ENCODE measurements at regions of chr9 and their contacts with region 1.

Region 1: DNA sequence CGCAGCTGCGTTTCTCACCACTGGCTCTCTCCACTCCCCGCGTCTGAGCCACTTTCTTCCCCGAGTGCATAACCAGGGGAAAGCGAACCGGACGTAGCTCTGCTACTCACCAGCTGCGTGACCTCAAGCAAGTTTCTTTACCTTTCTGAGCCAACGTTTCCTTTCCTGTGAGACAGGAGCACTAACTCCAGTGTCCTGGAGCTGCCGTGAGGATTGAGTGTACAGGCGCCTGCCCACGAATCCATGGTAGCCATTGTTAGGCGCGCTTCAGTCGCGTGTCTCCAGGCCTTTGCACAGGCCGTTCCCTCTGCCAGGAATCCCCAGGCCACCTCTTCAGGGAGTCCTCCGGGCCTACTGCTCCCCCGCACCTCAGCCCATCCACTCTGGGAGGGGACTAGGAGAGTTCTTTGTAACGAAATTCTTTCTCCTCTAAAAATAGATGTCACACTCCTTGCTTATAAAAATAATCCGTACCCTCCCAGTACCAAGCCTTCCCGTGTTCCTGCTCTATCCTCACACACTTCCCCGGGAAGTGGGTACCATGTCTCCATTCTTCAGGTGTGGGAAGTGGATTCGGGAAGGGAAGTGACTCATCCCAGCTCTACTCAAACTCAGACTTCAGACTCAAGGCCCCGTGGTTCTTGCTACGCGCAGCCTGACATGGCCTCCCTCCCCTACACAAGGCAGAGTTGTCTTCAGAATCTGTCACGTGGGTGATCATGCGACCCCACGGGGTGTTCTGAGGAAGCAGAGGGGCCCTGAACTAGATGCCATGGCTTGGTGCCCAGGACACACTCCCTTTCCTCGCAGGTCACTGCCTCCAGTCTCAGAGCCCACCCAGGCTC is 16.1 kb upstream of the CRB2 start:
- DNase-seq: no peak

Region 2: GRCh38 chr9:123268240-123268949 is 71.5 kb before region 1 on chr9 and contains the start of gene STRBP:
- intact Hi-C with region 1: loop called (anchors 5 kb)
- DNase-seq: peak; percentile 95
- total RNA-seq, gene STRBP: 16.1 TPM

Region 3: DNA sequence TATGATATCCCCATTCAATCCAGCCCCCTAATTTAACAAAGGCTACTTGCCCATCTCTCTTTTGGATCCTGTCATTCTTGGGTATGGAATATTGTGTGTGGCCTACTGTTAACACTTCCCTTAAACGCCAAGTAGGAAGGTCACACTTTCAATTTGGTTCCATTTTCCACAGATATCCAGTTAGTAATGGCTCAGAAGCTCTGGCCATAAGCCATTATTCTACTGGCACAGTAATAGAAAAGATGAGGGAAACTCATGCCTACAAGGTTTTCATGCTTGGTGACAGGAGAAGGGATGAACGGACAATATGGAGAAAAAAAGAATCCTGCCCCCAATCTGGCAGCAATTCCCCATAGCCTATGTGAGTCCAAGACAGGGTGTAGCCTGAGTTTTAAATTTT is 243.8 kb after region 1 on chr9:
- intact Hi-C with region 1: no loop called
- DNase-seq: no peak

Measured in cardiac septum (tissue), 1 donor.